SK-N-SH (cell line): ENCODE measurements at regions of chr11 and their contacts with region 1.

Region 1: DNA sequence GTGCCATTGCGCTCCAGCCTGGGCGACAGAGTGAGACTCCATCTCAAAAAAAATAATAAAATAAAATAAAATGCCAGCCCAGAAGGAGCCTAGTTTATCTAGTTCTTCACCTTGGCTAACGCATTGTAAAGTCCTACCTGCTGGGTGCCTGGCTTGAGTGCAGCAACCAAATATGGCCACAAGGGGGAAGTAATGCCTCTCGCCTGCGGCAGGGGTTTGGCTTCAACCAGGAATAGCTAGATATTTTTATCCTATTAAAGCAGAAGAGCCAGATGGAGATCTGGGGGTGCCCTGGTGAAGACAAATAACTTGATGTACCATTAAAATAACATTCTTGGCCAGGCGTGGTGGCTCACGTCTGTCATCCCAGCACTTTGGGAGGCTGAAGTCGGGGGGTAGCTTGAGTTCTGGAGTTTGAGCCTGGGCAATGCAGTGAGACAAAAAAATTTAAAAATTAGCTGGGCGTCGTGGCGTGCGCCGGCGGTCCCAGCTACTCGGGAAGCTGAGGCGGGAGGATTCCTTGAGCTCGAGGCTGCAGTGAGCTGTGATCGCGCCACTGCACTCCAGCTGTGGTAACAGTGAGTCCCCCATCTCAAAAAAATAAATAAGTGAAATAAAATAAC is 20.6 kb upstream of the PLEKHB1 start:
- DNase-seq: peak; percentile 81
- H3K4me3 ChIP-seq: peak overlapping the region in 1 of 2 experiments; percentile 45; a peak in 1 of 4 replicates
- H3K27ac ChIP-seq: no peak overlapping the region
- H3K4me1 ChIP-seq: no peaks in the 10 kb centered on the region
- H3K27me3 ChIP-seq: no peaks in the 10 kb centered on the region; the same call in 1 of the 2 replicates
- CTCF ChIP-seq: peak; percentile 92
- EP300 ChIP-seq: no peak
- RAD21 ChIP-seq: peak; percentile 81

Region 2: DNA sequence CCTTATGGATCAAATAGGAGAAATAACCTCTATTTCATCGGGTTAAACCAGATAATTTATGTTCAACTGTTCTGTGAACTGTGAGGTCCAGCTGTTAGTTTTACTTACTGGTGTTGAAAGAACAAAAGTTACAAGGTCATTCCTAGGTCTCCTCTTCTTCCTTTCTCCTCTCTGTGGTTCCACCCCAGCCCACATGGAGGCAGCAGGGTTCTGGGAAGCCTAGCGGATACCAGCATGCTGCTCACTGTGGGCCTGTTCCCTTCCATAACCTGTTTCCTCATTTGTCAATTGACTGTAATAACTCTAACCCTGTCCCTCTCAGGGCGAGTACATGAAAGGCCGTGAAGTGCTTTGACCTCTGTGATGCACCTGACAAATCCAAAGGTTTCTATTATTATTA is 221.8 kb before region 1 on chr11:
- CTCF ChIA-PET with region 1: interaction called, 17 read pairs
- POLR2A ChIA-PET with region 1: no interaction called
- DNase-seq: peak; percentile 84
- H3K4me3 ChIP-seq: no peak overlapping the region
- H3K27ac ChIP-seq: no peak overlapping the region
- H3K4me1 ChIP-seq: no peaks in the 10 kb centered on the region
- H3K27me3 ChIP-seq: no peaks in the 10 kb centered on the region
- CTCF ChIP-seq: peak; percentile 81
- EP300 ChIP-seq: no peak
- RAD21 ChIP-seq: peak; percentile 94

Region 3: DNA sequence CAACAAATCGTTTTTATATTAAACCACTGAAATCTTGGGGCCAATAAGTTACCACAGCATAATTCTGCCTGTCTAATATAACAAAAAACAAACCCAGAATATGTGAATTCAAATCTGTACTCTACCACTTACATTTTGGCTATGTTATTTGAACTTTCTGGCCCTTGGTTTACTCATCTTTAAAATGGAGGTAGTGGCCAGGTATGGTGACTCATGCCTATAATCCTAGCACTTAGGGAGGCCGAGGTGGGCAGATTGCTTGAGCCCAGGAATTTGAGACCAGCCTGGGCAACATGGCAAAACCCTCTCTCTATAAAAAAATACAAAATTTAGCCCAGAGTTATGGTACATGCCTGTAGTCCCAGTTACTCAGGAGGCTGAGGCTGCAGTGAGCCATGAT is 112.1 kb before region 1 on chr11:
- CTCF ChIA-PET with region 1: no interaction called
- POLR2A ChIA-PET with region 1: no interaction called
- DNase-seq: no peak
- H3K4me3 ChIP-seq: no peak overlapping the region
- H3K27ac ChIP-seq: no peak overlapping the region
- H3K4me1 ChIP-seq: no peaks in the 10 kb centered on the region; a peak in 2 of 4 replicates
- H3K27me3 ChIP-seq: no peaks in the 10 kb centered on the region
- CTCF ChIP-seq: no peak
- EP300 ChIP-seq: no peak
- RAD21 ChIP-seq: no peak

Region 4: GRCh38 chr11:73597956-73598718 is 27.7 kb before region 1 on chr11 and contains the start of gene FAM168A:
- CTCF ChIA-PET with region 1: interaction called, 12 read pairs
- POLR2A ChIA-PET with region 1: interaction called, 6 read pairs
- DNase-seq: peak; percentile 96
- H3K4me3 ChIP-seq: peak within 1 kb of the TSS; percentile 71 to 76
- H3K27ac ChIP-seq: peak within 1 kb of the TSS; percentile 70 to 92
- H3K4me1 ChIP-seq: peaks cover 9 to 12% of the 10 kb centered on the region in 2 experiments; a peak in 3 of 4 replicates
- H3K27me3 ChIP-seq: no peaks in the 10 kb centered on the region
- CTCF ChIP-seq: 0 out of 2 replicates have a peak, but pooled peaks have one; percentile 27
- EP300 ChIP-seq: no peak
- RAD21 ChIP-seq: no peak; the same call in 1 of the 2 replicates
- polyA plus RNA-seq, gene FAM168A: 17.8 and 18.2 TPM in 2 replicates

Region 5: DNA sequence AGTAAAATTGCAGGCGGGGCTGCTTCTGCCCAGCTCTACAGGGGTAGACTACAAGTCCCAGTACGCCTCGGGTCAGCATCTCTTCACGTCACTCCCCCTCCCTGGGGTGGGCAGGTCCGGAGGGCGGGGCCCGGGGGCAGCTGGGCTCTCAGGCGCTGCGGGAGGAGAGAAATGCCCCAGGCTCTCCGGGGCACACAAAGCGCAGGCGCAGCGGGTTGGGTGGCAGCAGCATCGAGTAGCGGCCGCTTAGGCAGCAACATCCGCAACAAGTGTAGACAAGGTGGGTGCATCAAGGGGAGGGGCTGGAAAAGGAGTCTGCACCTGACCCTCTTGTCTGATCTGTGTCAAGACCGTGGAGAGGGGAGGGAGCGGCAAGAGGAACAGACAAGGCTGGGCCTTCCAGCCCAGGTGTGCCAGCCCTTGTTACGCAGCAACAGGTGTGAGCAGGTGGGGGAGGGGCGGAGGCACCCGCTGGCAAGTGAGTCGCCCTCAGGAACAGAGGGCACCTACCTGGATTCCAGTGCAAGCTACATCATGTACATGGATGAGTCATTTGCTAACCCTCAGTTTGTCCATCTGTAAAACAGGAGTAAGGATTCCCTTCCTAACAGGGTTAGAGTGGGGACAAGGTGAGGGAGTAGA is 21.8 kb after region 1 on chr11:
- CTCF ChIA-PET with region 1: interaction called, 35 read pairs
- POLR2A ChIA-PET with region 1: no interaction called
- DNase-seq: peak; percentile 87
- H3K4me3 ChIP-seq: peak overlapping the region in 1 of 2 experiments; percentile 20; a peak in 2 of 4 replicates
- H3K27ac ChIP-seq: no peak overlapping the region
- H3K4me1 ChIP-seq: peaks cover 0 to 7% of the 10 kb centered on the region in 2 experiments; a peak in 1 of 4 replicates
- H3K27me3 ChIP-seq: no peaks in the 10 kb centered on the region
- CTCF ChIP-seq: no peak
- EP300 ChIP-seq: no peak
- RAD21 ChIP-seq: no peak

Region 6: DNA sequence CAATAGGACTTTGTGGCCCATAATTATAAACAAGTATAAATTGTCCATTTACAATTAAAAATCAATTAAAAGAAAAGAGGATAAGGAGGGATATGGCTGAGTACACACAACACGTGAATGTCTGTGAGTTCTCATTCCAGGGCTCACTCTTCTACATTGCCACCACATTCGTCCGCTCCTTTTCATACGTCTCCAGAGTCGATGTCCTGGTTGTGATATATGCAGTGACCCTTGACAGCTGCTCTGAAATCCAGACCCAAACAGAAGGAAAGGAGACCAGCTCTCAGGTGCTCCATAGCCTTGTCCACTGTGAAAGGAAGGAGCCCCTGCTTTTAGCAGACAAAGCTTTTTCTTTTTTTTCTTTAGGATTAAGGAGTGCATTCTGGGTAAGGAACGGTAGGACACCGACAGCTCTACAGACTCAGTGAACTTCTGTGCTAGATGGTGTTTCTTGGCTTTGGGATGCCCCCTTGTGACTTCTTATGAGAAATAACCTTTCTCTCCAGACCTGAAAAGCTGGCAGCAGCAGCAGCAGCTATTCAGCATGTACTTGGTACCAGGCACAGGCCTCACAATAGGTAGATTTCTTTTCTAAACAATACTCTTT is 305.3 kb after region 1 on chr11:
- CTCF ChIA-PET with region 1: interaction called, 10 read pairs
- POLR2A ChIA-PET with region 1: no interaction called
- DNase-seq: peak; percentile 64
- H3K4me3 ChIP-seq: no peak overlapping the region
- H3K27ac ChIP-seq: no peak overlapping the region
- H3K4me1 ChIP-seq: no peaks in the 10 kb centered on the region
- H3K27me3 ChIP-seq: no peaks in the 10 kb centered on the region
- CTCF ChIP-seq: peak; percentile 59
- EP300 ChIP-seq: no peak
- RAD21 ChIP-seq: peak; percentile 81

Region 7: GRCh38 chr11:73999581-74000306 is 373.9 kb after region 1 on chr11:
- CTCF ChIA-PET with region 1: no interaction called
- POLR2A ChIA-PET with region 1: no interaction called
- DNase-seq: no peak
- H3K4me3 ChIP-seq: no peak overlapping the region
- H3K27ac ChIP-seq: no peak overlapping the region
- H3K4me1 ChIP-seq: no peaks in the 10 kb centered on the region
- H3K27me3 ChIP-seq: no peaks in the 10 kb centered on the region
- CTCF ChIP-seq: no peak
- EP300 ChIP-seq: no peak
- RAD21 ChIP-seq: no peak